ENCODE measurements at regions of chr2 and their contacts with region 1.

Region 1: DNA sequence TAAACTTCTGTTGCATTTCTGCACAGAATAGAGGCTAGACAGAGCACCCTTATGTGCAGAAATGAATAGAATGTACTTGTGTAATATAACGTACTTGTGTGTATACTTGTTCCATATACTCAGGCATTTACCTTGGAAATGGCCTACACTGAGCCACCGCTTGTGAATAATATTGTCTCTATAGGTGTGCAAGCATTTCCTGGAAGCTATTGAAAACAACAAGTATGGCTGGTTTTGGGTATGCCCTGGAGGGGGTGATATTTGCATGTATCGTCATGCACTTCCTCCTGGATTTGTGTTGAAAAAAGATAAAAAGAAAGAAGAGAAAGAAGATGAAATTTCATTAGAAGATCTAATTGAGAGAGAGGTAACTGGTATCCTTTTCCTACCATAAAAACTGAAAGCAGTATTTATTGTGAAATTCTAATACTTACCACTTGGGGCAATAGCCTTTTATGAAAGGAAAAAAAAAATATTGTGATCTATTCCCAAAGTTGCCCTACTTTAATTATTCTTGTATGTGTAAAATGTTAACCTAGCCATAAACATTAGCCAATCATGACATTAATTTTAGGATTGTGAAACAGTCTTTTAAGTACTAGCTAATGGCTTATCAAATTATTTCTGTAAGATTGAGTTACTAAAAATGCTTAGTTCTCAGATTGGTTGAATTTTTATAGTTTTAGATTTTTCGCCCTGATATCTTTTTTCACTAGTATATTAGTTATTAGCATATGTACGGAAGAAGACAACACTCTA is 18.0 kb downstream of the ZC3H15 start:
- DNase-seq: no peak
- ATAC-seq: peak; percentile 40

Region 2: GRCh38 chr2:186641807-186642321 is 137.8 kb after region 1 on chr2:
- intact Hi-C with region 1: loop called (anchors 5 to 10 kb)
- DNase-seq: peak in 1 of 2 donors; percentile 14
- ATAC-seq: peak; percentile 89